Ascending aorta (tissue), 2 donors: ENCODE measurements at regions of chr3 and their contacts with region 1.

Region 1: GRCh38 chr3:66998113-66998903 is at the start of gene KBTBD8:
- DNase-seq: peak; percentile 97 to 99
- H3K4me3 ChIP-seq: peak within 1 kb of the TSS; percentile 84 to 85
- H3K27ac ChIP-seq: peak within 1 kb of the TSS; percentile 57 to 58
- H3K4me1 ChIP-seq: peaks cover 0 to 5% of the 10 kb centered on the region in 2 donors
- H3K27me3 ChIP-seq: no peaks in the 10 kb centered on the region
- CTCF ChIP-seq: no peak
- total RNA-seq, gene KBTBD8: not detected

Region 2: DNA sequence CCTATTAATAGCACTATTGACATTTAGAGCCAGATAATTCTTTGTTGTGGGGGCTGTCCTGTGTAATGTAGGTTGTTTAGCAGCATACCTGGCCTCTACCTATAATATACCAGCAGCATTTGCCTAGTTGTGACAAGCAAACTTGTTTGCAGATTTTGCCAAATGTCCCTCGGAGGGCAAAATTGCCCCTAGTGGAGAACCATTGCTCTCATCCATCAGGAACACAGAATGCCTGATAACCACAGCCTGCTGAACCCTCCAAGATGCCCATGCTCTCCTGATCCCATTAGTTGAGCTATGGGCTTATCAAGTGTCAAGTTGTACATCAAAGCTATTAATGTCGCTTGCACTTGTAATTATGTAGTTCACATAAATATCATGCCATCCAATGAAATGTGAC is 15.2 kb before region 1 on chr3:
- intact Hi-C with region 1: no loop called
- DNase-seq: no peak
- H3K4me3 ChIP-seq: no peak overlapping the region
- H3K27ac ChIP-seq: no peak overlapping the region
- H3K4me1 ChIP-seq: no peaks in the 10 kb centered on the region
- H3K27me3 ChIP-seq: no peaks in the 10 kb centered on the region
- CTCF ChIP-seq: no peak

Region 3: GRCh38 chr3:67635257-67635656 is 636.9 kb after region 1 on chr3:
- intact Hi-C with region 1: no loop called
- DNase-seq: no peak
- H3K4me3 ChIP-seq: no peak overlapping the region
- H3K27ac ChIP-seq: no peak overlapping the region
- H3K4me1 ChIP-seq: peaks cover 0 to 4% of the 10 kb centered on the region in 2 donors
- H3K27me3 ChIP-seq: no peaks in the 10 kb centered on the region
- CTCF ChIP-seq: no peak

Region 4: GRCh38 chr3:67654099-67654843 is 656.0 kb after region 1 on chr3 and contains the start of gene SUCLG2:
- intact Hi-C with region 1: loop called (anchors 5 kb)
- DNase-seq: peak; percentile 62 to 95
- H3K4me3 ChIP-seq: peak within 1 kb of the TSS; percentile 84 to 86
- H3K27ac ChIP-seq: peak within 1 kb of the TSS; percentile 92 to 99
- H3K4me1 ChIP-seq: peaks cover 4 to 14% of the 10 kb centered on the region in 2 donors
- H3K27me3 ChIP-seq: no peaks in the 10 kb centered on the region
- CTCF ChIP-seq: no peak
- total RNA-seq, gene SUCLG2: 33.6 TPM